ENCODE measurements at regions of chr15 and their contacts with region 1.

Region 1: GRCh38 chr15:75578948-75579920 is at the start of gene PTPN9:
- DNase-seq: peak; percentile 88
- H3K4me3 ChIP-seq: peak within 1 kb of the TSS; percentile 59 to 99 (median 94)
- H3K27ac ChIP-seq: peak within 1 kb of the TSS; percentile 89 to 92 (median 92)
- H3K4me1 ChIP-seq: peaks cover 0 to 29% (median 23%) of the 10 kb centered on the region in 4 donors
- H3K27me3 ChIP-seq: no peaks in the 10 kb centered on the region
- CTCF ChIP-seq: peak in 2 of 4 experiments; percentile 16 to 64
- EP300 ChIP-seq: no peak
- POLR2A ChIP-seq: peak in 1 of 2 donors; percentile 13
- total RNA-seq, gene PTPN9: 12.2 to 21.0 (median 17.2) TPM

Region 2: DNA sequence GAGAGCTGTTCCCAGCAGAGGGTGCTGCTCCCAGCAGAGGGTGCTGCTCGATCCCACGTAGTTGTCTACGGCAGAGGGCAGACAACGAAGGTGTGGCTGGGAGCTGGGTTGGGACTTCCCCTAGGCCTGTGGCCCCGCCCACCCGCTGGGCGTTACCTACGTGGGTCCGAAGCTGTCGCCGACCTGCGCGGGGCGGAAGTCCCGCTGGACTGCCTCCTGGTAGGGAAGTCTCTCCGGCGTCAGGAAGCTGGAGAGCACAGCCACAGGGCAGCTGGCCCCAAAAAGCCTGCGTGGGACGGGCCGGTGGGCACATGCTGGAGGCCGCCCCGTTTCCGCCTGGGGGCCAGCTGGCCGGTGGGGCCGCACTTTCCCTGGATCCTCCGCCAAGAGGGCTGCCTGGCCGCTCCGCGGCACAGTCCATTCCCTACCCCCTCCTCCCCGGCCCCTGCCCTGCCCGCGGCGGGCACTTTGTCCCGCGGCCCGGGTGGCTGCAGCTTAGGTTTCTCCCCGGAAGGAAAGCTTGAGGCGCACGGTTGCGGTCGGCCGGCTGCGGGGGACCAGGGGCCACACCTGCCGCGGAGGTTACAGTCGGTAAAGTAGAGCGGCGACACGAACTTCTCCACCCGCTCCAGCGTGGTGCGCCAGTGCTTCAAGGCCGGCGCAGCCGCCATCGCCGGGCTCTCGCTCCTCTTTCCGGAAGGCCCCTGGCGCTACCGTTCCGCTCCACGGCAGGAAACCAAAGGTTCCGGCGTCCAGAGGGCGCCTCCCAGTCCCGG is 211.1 kb before region 1 on chr15 and contains the start of gene MAN2C1:
- intact Hi-C with region 1: loop called (anchors 10 kb)
- DNase-seq: peak; percentile 98
- H3K4me3 ChIP-seq: peak within 1 kb of the TSS; percentile 73 to 99 (median 82)
- H3K27ac ChIP-seq: peak within 1 kb of the TSS; percentile 95 to 99 (median 97)
- H3K4me1 ChIP-seq: peaks cover 0 to 22% (median 18%) of the 10 kb centered on the region in 4 donors
- H3K27me3 ChIP-seq: no peaks in the 10 kb centered on the region
- CTCF ChIP-seq: peak in 2 of 4 experiments; percentile 65 to 80
- EP300 ChIP-seq: peak in 1 of 4 donors; percentile 20
- POLR2A ChIP-seq: peak; percentile 70 to 71
- total RNA-seq, gene MAN2C1: 94.2 to 221 (median 132) TPM

Region 3: GRCh38 chr15:75460646-75461045 is 118.6 kb before region 1 on chr15:
- intact Hi-C with region 1: no loop called
- DNase-seq: no peak
- H3K4me3 ChIP-seq: no peak overlapping the region
- H3K27ac ChIP-seq: no peak overlapping the region
- H3K4me1 ChIP-seq: peaks cover 0 to 24% (median 12%) of the 10 kb centered on the region in 4 donors
- H3K27me3 ChIP-seq: no peaks in the 10 kb centered on the region
- CTCF ChIP-seq: no peak
- EP300 ChIP-seq: no peak
- POLR2A ChIP-seq: no peak

Region 4: GRCh38 chr15:75532413-75533147 is 46.7 kb before region 1 on chr15:
- intact Hi-C with region 1: loop called (anchors 2 kb)
- DNase-seq: peak; percentile 86
- H3K4me3 ChIP-seq: no peak overlapping the region
- H3K27ac ChIP-seq: peak overlapping the region; percentile 71 to 77 (median 74)
- H3K4me1 ChIP-seq: peaks cover 0 to 36% (median 30%) of the 10 kb centered on the region in 4 donors
- H3K27me3 ChIP-seq: no peaks in the 10 kb centered on the region
- CTCF ChIP-seq: peak; percentile 27 to 42 (median 30)
- EP300 ChIP-seq: peak in 1 of 4 donors; percentile 14
- POLR2A ChIP-seq: no peak

Region 5: DNA sequence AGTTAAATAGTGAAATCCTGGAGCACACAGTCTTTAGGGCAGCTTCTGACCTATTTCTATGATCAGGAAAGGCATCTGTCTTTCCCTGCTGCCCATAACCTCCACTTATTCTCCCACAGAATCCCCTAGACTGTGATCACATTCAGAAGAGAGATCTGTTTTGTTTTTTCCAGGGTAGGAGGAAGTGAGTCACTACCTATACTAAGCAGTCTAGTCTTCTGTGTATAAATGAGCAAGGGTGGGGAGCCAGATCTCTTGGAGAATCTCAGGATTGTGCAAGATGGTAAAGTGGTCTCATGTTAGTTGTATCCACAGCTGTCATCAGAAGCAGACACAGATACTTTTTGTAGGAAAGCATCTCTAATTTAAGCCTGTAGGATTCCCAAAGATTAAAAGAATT is 312.7 kb after region 1 on chr15:
- intact Hi-C with region 1: no loop called
- DNase-seq: no peak
- H3K4me3 ChIP-seq: no peak overlapping the region
- H3K27ac ChIP-seq: peak overlapping the region in 1 of 4 donors; percentile 22
- H3K4me1 ChIP-seq: peaks cover 0 to 6% (median 0%) of the 10 kb centered on the region in 4 donors
- H3K27me3 ChIP-seq: no peaks in the 10 kb centered on the region
- CTCF ChIP-seq: no peak
- EP300 ChIP-seq: no peak
- POLR2A ChIP-seq: no peak

Measured in sigmoid colon (tissue), 7 donors.